ENCODE measurements at regions of chr5 and their contacts with region 1.

Region 1: DNA sequence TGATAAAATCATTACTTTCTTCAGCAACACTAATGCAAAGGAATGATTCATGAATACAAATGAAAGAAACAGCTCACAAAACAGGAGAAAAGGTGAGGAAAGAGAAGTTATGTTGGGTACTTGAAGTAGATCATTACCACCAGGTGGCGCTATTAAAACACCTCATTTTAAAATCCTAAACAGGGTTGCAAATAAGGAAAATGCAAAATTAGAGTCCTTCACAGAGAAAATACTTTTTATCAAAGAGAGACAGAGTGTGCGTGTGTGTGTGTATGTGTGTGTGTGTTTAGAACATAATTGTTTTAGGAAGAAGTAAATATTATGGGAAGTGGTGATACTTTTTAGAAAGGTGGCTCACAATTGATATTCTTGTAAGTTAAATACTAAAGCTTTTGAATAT is 49.5 kb upstream of the CD180 start:
- DNase-seq: no peak
- ATAC-seq: peak; percentile 72 to 77
- H3K4me3 ChIP-seq: no peak overlapping the region
- H3K27ac ChIP-seq: peak overlapping the region in 3 of 4 donors; percentile 4 to 14 (median 14)
- H3K4me1 ChIP-seq: peaks cover 8 to 12% of the 10 kb centered on the region in 2 donors
- H3K27me3 ChIP-seq: no peaks in the 10 kb centered on the region
- CTCF ChIP-seq: peak; percentile 74 to 83 (median 81)
- POLR2A ChIP-seq: no peak

Region 2: DNA sequence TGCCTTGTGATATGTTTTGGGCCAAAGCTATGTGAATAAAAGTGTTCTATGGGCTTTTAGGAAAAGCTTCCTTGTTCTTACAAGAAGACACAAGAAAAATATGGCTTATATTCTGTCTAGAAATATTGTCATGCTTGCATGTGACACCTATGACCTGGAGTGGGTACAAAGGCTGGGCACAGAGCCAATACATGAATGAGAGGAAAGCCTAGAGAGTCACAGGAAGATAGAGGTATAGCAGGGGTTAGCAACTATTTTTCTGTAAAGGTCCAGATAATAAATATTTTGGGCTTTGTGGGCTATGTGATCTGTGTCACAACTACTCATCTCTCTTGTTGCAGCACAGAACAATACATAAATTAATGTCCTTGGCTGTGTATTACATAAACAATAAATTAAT is 147.1 kb after region 1 on chr5:
- in situ Hi-C with region 1: no loop called
- intact Hi-C with region 1: loop called (anchors 5 kb)
- DNase-seq: no peak
- ATAC-seq: no peak
- H3K4me3 ChIP-seq: no peak overlapping the region
- H3K27ac ChIP-seq: no peak overlapping the region
- H3K4me1 ChIP-seq: no peaks in the 10 kb centered on the region
- H3K27me3 ChIP-seq: no peaks in the 10 kb centered on the region
- CTCF ChIP-seq: no peak
- POLR2A ChIP-seq: no peak

Region 3: DNA sequence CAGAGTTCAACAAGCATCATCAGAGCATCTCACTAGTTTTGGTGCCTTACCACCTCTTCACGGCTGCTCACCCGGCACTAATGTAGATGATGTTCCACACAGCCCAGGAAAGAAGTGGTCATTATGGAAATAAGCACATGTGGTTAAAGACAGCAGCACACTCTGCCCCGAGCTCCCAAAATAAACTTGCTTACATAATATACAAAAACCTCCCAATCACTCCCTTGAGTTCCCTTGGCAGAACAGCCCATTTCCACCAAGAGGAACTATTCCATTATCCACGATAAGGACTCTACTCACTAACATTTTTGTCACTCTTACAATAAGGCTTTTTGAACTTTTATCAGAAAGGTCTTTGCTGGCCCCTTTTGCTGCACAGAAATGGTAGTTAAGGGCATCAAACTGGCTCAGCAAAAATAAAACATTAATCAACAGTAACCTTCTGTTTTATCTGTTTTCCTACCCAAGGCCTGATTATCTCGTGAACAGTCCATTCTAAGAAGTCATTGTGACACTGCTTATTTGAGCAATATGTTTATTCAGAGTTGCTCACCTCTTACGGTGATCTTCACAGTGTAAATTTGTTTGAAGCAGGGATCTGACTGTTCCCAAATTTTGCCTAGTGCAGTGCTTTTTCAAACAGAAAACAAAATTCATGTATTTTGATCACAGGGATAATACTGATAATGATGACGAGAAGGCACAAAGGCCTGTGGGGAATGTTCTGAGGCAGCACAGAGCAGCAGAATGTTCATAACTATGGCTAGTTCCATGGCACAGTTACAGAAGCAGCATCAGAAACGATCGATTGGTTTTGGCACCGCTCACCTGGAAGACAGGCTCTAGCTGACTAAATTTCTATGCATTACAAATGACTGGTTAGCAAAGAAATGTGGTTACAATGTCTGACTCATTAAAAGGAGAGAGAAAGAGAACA is 569.6 kb after region 1 on chr5:
- in situ Hi-C with region 1: loop called in 2 of 4 experiments (anchors 25 kb)
- intact Hi-C with region 1: no loop called
- DNase-seq: peak; percentile 28 to 35
- ATAC-seq: peak; percentile 86 to 90
- H3K4me3 ChIP-seq: no peak overlapping the region
- H3K27ac ChIP-seq: peak overlapping the region; percentile 27 to 55 (median 50)
- H3K4me1 ChIP-seq: peaks cover 7 to 22% of the 10 kb centered on the region in 2 donors
- H3K27me3 ChIP-seq: no peaks in the 10 kb centered on the region
- CTCF ChIP-seq: no peak
- POLR2A ChIP-seq: no peak

Region 4: GRCh38 chr5:68170826-68171558 is 924.9 kb after region 1 on chr5:
- in situ Hi-C with region 1: no loop called
- intact Hi-C with region 1: loop called (anchors 10 kb)
- DNase-seq: peak; percentile 82 to 93
- ATAC-seq: peak; percentile 99 to 100
- H3K4me3 ChIP-seq: peak overlapping the region; percentile 18 to 31 (median 26)
- H3K27ac ChIP-seq: peak overlapping the region; percentile 73 to 86 (median 85)
- H3K4me1 ChIP-seq: peaks cover 27 to 31% of the 10 kb centered on the region in 2 donors
- H3K27me3 ChIP-seq: no peaks in the 10 kb centered on the region
- CTCF ChIP-seq: no peak
- POLR2A ChIP-seq: peak in 1 of 2 donors; percentile 30

Region 5: DNA sequence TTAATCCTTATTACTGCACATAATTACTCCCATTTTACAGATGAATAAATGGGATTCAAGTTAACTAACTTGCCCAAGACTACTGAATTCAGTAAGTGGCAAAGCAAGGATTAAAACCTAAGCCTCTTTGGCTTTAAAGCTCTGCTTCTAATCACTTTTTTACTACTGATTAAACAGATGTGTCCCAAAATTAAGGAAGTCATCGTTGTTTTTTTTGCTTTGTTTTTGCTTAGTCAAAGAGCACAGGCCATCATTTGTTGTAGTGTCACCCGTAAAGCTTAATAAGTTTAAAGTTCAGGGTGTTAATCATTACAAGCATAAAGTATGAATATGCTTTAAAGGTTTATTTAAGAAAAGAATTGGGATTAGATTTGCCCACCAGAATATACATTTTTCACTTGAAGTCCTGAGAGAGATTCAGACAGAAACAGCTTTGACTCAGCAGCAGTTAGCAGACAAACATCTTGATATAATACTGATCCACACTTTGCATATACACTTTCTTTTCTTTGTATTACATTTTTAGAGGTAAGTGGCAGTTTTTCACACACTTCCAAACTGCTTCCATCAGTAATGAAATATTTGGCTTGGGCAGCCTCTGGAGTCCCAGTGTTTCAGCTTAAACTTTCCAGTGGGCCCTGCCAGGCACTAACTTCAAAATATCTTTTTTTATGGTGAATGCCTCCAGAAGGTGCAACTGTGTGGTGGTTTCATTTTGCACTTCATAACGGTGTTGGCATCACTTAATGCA is 1022.2 kb after region 1 on chr5:
- in situ Hi-C with region 1: loop called in 1 of 4 experiments (anchors 25 kb)
- intact Hi-C with region 1: loop called (anchors 5 kb)
- DNase-seq: no peak
- ATAC-seq: no peak
- H3K4me3 ChIP-seq: peak overlapping the region in 1 of 4 donors; percentile 5
- H3K27ac ChIP-seq: peak overlapping the region; percentile 1 to 58 (median 20)
- H3K4me1 ChIP-seq: peaks cover 70 to 84% of the 10 kb centered on the region in 2 donors
- H3K27me3 ChIP-seq: no peaks in the 10 kb centered on the region
- CTCF ChIP-seq: no peak
- POLR2A ChIP-seq: no peak

Region 6: DNA sequence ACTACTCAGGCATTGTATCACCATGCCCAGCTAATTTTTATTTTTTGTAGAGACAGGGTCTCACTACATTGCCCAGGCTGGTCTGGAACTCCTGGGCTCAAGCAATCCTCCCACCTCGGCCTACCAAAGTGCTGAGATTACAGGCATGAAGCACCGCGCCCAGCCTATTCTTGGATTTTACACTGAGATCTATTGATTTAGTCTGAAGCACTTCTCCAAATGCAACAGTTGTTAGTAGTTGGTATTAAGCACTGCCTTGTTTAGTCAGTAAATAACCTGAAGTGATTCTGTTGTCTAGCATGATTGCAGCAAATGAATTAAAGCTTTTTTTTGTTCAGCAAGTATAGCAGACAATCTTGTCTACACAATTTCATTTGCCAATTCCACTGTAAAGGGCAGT is 1911.9 kb after region 1 on chr5:
- in situ Hi-C with region 1: no loop called
- intact Hi-C with region 1: no loop called
- DNase-seq: no peak
- ATAC-seq: no peak
- H3K4me3 ChIP-seq: no peak overlapping the region
- H3K27ac ChIP-seq: no peak overlapping the region
- H3K4me1 ChIP-seq: no peaks in the 10 kb centered on the region
- H3K27me3 ChIP-seq: no peaks in the 10 kb centered on the region
- CTCF ChIP-seq: no peak
- POLR2A ChIP-seq: no peak

Measured in gastrocnemius medialis (tissue), 4 donors.